ENCODE measurements at regions of chr13 and their contacts with region 1.

Region 1: DNA sequence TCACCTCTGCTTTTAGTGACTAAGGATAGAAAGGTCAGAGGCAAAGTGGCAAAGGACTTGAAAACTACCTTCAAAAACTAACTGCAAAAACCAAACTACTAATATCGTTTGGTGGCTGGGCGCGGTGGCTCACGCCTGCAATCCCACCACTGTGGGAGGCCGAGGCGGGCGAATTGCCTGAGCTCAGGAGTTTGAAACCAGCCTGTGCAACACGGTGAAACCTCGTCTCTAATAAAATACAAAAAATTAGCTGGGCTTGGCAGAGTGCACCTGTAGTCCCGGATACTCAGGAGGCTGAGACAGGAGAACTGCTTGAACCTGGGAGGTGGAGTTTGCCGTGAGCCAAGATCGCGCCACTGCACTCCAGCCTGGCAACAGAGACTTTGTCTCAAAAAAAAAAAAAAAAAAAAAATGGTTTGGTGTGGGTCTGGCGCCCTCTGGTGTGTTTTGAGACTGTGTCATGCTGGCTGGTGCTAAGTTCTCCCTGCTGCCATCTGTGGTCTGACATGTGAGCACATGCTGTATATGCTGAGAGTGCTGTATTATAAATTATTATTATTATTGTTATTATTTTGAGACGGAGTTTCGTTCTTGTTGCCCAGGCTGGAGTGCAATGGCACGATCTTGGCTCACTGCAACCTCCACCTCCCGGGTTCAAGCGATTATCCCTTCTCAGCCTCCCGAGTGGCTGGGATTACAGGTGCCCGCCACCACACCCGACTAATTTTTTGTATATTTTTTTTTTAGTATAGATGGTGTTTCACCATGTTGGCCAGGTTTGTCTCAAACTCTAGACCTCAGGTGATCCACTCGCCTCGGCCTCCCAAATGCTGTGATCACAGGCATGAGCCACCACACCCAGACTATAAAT is 36.0 kb upstream of the RNF17 start:
- DNase-seq: peak; percentile 82
- ATAC-seq: peak; percentile 98
- H3K4me3 Mint-ChIP-seq: no peak overlapping the region
- H3K27ac Mint-ChIP-seq: no peak overlapping the region
- H3K4me1 Mint-ChIP-seq: no peaks in the 10 kb centered on the region
- H3K27me3 Mint-ChIP-seq: peaks cover 21% of the 10 kb centered on the region
- CTCF ChIP-seq: peak; percentile 78

Region 2: DNA sequence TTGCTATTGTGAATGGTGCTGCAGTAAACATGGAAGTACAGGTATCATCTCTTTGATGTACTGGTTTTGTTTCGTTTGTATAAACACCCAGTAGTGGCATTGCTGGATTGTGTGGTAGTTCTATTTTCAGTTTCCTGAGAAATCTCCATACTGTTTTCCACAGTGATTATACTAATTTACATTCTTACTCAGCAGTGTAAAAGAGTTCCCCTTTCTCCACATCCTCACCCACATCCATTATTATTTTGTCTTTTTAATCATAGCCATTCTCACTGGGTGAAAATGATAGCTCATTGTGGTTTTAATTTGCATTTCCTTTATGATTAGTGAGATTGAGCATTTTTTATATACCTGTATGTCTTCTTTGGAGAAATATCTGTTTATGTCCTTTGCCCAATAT is 153.1 kb before region 1 on chr13:
- CTCF ChIA-PET with region 1: interaction called, 30 read pairs
- POLR2A ChIA-PET with region 1: no interaction called
- intact Hi-C with region 1: loop called (anchors 5 kb)
- DNase-seq: no peak
- ATAC-seq: peak; percentile 45
- H3K4me3 Mint-ChIP-seq: no peak overlapping the region
- H3K27ac Mint-ChIP-seq: no peak overlapping the region
- H3K4me1 Mint-ChIP-seq: peaks cover 11% of the 10 kb centered on the region
- H3K27me3 Mint-ChIP-seq: peaks cover 6% of the 10 kb centered on the region
- CTCF ChIP-seq: no peak

Region 3: GRCh38 chr13:24605923-24606372 is 122.0 kb before region 1 on chr13:
- CTCF ChIA-PET with region 1: interaction called, 18 read pairs
- POLR2A ChIA-PET with region 1: no interaction called
- intact Hi-C with region 1: no loop called
- DNase-seq: no peak
- ATAC-seq: peak; percentile 76
- H3K4me3 Mint-ChIP-seq: no peak overlapping the region
- H3K27ac Mint-ChIP-seq: peak overlapping the region; percentile 41
- H3K4me1 Mint-ChIP-seq: peaks cover 32% of the 10 kb centered on the region
- H3K27me3 Mint-ChIP-seq: no peaks in the 10 kb centered on the region
- CTCF ChIP-seq: peak; percentile 45

Region 4: GRCh38 chr13:24683838-24684599 is 43.9 kb before region 1 on chr13:
- CTCF ChIA-PET with region 1: interaction called, 17 read pairs
- POLR2A ChIA-PET with region 1: no interaction called
- intact Hi-C with region 1: loop called (anchors 2 kb)
- DNase-seq: peak; percentile 80
- ATAC-seq: peak; percentile 82
- H3K4me3 Mint-ChIP-seq: no peak overlapping the region
- H3K27ac Mint-ChIP-seq: no peak overlapping the region
- H3K4me1 Mint-ChIP-seq: peaks cover 37% of the 10 kb centered on the region
- H3K27me3 Mint-ChIP-seq: peaks cover 38% of the 10 kb centered on the region
- CTCF ChIP-seq: peak; percentile 98

Region 5: GRCh38 chr13:24693862-24694471 is 34.0 kb before region 1 on chr13:
- CTCF ChIA-PET with region 1: interaction called, 99 read pairs
- POLR2A ChIA-PET with region 1: interaction called, 3 read pairs
- intact Hi-C with region 1: no loop called
- DNase-seq: peak; percentile 64
- ATAC-seq: peak; percentile 80
- H3K4me3 Mint-ChIP-seq: no peak overlapping the region
- H3K27ac Mint-ChIP-seq: no peak overlapping the region
- H3K4me1 Mint-ChIP-seq: peaks cover 6% of the 10 kb centered on the region
- H3K27me3 Mint-ChIP-seq: peaks cover 39% of the 10 kb centered on the region
- CTCF ChIP-seq: peak; percentile 82

Region 6: GRCh38 chr13:24700539-24700938 is 27.4 kb before region 1 on chr13:
- CTCF ChIA-PET with region 1: interaction called, 10 read pairs
- POLR2A ChIA-PET with region 1: no interaction called
- intact Hi-C with region 1: no loop called
- DNase-seq: no peak
- ATAC-seq: peak; percentile 42
- H3K4me3 Mint-ChIP-seq: no peak overlapping the region
- H3K27ac Mint-ChIP-seq: no peak overlapping the region
- H3K4me1 Mint-ChIP-seq: peaks cover 8% of the 10 kb centered on the region
- H3K27me3 Mint-ChIP-seq: peaks cover 20% of the 10 kb centered on the region
- CTCF ChIP-seq: no peak

Region 7: GRCh38 chr13:24709186-24709913 is 18.6 kb before region 1 on chr13:
- CTCF ChIA-PET with region 1: interaction called, 12 read pairs
- POLR2A ChIA-PET with region 1: interaction called, 5 read pairs
- intact Hi-C with region 1: no loop called
- DNase-seq: peak; percentile 86
- ATAC-seq: peak; percentile 96
- H3K4me3 Mint-ChIP-seq: peak overlapping the region; percentile 40
- H3K27ac Mint-ChIP-seq: peak overlapping the region; percentile 73
- H3K4me1 Mint-ChIP-seq: peaks cover 18% of the 10 kb centered on the region
- H3K27me3 Mint-ChIP-seq: no peaks in the 10 kb centered on the region
- CTCF ChIP-seq: peak; percentile 10

Measured in activated CD8-positive, alpha-beta T cell treated with anti-CD3 and anti-CD28 coated beads for 36 hours (primary cell).